Head of caudate nucleus (tissue), 42 donors: ENCODE measurements at regions of chr12 and their contacts with region 1.

Region 1: DNA sequence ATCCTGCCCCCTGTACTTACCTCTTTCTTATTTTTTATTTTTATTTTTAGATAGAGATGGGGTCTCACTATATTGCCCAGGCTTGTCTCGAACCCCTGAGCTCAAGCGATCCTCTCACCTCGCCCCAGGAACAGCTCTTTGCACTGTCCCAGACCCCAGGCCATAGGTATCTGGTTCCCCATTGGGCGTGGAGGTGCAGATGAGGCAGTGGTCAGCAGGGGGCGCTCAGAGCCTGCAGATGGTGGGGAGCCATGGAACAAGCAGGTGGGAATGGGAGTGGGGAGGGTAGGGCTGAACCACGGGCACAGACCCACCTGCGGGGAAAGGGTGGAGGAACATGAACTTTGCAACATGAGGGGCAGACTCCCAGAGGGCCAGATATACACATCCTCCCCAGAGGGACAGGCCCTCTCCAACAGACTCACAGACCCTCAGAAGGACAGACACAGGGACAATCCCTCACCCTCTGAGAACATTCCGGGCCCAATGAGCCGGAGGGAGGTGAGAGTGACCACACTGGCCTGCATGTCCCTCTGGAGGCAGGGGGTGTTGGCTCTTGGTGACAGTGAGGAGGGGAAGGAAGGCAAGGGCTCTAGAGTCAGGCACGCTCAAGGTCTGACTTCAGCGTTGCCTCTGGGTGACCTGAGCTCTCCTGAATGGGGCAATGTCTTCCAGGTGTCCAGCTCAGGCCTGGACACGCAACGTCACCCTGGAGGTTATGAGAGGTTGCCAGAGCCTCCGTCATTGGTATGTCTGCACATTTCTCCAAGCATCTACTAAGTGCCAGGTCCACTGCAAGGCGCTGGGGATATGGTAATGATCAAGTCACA is 34.9 kb downstream of the KRT80 start:
- DNase-seq: peak; percentile 64 to 93 (median 82)

Region 2: GRCh38 chr12:52213512-52214420 is 56.8 kb after region 1 on chr12:
- intact Hi-C with region 1: loop called (anchors 5 kb)
- DNase-seq: peak; percentile 48 to 88 (median 73)

Region 3: GRCh38 chr12:52327052-52327829 is 170.3 kb after region 1 on chr12:
- intact Hi-C with region 1: loop called (anchors 5 kb)
- DNase-seq: peak; percentile 62 to 94 (median 84)

Region 4: GRCh38 chr12:52568111-52568510 is 411.2 kb after region 1 on chr12:
- intact Hi-C with region 1: no loop called
- DNase-seq: peak in 35 of 42 donors; percentile 8 to 72 (median 37)

Region 5: GRCh38 chr12:52870351-52871290 is 713.7 kb after region 1 on chr12:
- intact Hi-C with region 1: loop called (anchors 5 kb)
- DNase-seq: peak; percentile 31 to 82 (median 60)